ENCODE measurements at regions of chr1 and their contacts with region 1.

Region 1: GRCh38 chr1:100866041-100866900 is 28.4 kb downstream of the EXTL2 start:
- DNase-seq: no peak
- H3K4me3 ChIP-seq: no peak overlapping the region
- H3K27ac ChIP-seq: no peak overlapping the region
- H3K4me1 ChIP-seq: no peaks in the 10 kb centered on the region
- H3K27me3 ChIP-seq: no peaks in the 10 kb centered on the region
- CTCF ChIP-seq: peak in 3 of 4 experiments; percentile 54 to 67 (median 57)
- POLR2A ChIP-seq: no peak

Region 2: GRCh38 chr1:100459358-100460114 is 406.7 kb before region 1 on chr1:
- intact Hi-C with region 1: loop called (anchors 5 kb)
- DNase-seq: peak; percentile 76
- H3K4me3 ChIP-seq: no peak overlapping the region
- H3K27ac ChIP-seq: peak overlapping the region in 1 of 2 donors; percentile 39
- H3K4me1 ChIP-seq: peaks cover 3% of the 10 kb centered on the region
- H3K27me3 ChIP-seq: no peaks in the 10 kb centered on the region
- CTCF ChIP-seq: peak; percentile 58 to 89 (median 82)
- POLR2A ChIP-seq: no peak

Region 3: GRCh38 chr1:100606438-100606837 is 259.8 kb before region 1 on chr1:
- intact Hi-C with region 1: loop called (anchors 2 kb)
- DNase-seq: no peak
- H3K4me3 ChIP-seq: no peak overlapping the region
- H3K27ac ChIP-seq: no peak overlapping the region
- H3K4me1 ChIP-seq: no peaks in the 10 kb centered on the region
- H3K27me3 ChIP-seq: no peaks in the 10 kb centered on the region
- CTCF ChIP-seq: peak in 3 of 4 experiments; percentile 44 to 62 (median 58)
- POLR2A ChIP-seq: no peak

Region 4: DNA sequence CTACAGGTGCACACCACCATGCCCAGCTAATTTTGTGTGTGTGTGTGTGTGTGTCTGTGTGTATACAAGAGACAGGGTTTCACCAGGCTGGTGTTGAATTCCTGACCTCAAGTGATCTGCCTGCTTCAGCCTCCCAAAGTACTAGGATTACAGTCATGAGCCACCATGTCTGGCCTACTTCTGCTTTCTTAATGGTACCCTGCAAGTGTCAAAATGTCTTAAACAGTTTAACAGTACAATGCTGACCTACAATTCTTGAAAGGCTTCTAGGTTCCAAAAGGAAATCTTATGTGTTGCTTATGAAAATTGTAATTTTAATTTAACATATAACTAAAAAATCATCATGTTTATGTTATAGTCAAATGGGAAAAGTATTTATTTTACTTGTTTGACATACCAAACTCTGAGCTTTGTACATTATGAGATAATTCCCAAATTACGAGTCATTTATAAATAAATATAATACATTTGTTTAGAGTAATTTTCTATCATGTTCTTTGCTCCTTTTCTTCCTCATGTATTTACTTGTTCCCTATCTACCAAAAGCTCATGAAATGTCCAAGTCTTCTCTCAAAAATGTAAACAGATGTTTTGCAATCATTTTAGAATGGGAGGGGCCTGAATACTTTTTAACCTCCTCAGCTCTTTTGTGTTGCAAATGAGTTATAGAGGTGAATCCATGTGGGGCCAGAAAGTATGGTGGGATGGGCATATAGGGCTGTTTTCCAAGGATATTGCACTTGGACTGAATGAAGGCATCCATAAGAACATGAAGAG is 155.2 kb before region 1 on chr1:
- intact Hi-C with region 1: no loop called
- DNase-seq: no peak
- H3K4me3 ChIP-seq: no peak overlapping the region
- H3K27ac ChIP-seq: no peak overlapping the region
- H3K4me1 ChIP-seq: no peaks in the 10 kb centered on the region
- H3K27me3 ChIP-seq: no peaks in the 10 kb centered on the region
- CTCF ChIP-seq: no peak
- POLR2A ChIP-seq: no peak

Region 5: GRCh38 chr1:100811808-100812207 is 54.5 kb before region 1 on chr1:
- intact Hi-C with region 1: no loop called
- DNase-seq: no peak
- H3K4me3 ChIP-seq: no peak overlapping the region
- H3K27ac ChIP-seq: no peak overlapping the region
- H3K4me1 ChIP-seq: no peaks in the 10 kb centered on the region
- H3K27me3 ChIP-seq: no peaks in the 10 kb centered on the region
- CTCF ChIP-seq: no peak
- POLR2A ChIP-seq: no peak

Region 6: GRCh38 chr1:100950781-100951180 is 84.5 kb after region 1 on chr1:
- intact Hi-C with region 1: no loop called
- DNase-seq: no peak
- H3K4me3 ChIP-seq: no peak overlapping the region
- H3K27ac ChIP-seq: no peak overlapping the region
- H3K4me1 ChIP-seq: no peaks in the 10 kb centered on the region
- H3K27me3 ChIP-seq: no peaks in the 10 kb centered on the region
- CTCF ChIP-seq: no peak
- POLR2A ChIP-seq: no peak